ENCODE measurements at regions of chr3 and their contacts with region 1.

Region 1: DNA sequence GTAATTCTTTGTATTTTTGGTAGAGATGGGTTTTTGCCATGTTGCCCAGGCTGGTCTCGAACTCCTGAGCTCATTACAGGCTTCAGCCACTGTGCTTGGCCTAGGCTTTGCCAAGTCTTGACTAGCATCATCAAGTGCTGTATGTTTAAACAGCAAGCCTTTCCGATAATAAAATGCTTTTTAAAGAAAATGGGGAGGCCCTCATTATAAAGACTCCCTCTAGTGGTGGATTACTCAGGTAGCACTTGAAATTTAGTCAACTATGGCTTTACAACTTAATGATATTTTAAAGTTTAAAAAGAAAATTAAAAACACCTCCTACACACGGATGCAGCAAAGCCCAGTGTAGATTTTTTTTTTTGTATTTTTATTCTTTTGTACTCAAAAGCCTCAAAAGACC is 213.6 kb downstream of the GAP43 start:
- DNase-seq: no peak
- ATAC-seq: peak; percentile 52; the same call in 2 of the 3 replicates
- H3K4me3 ChIP-seq: no peak overlapping the region
- H3K27ac ChIP-seq: no peak overlapping the region
- H3K4me1 ChIP-seq: no peaks in the 10 kb centered on the region
- H3K27me3 ChIP-seq: no peaks in the 10 kb centered on the region
- CTCF ChIP-seq: peak; percentile 35 to 61 (median 42)
- EP300 ChIP-seq: no peak
- POLR2A ChIP-seq: no peak
- RAD21 ChIP-seq: no peak

Region 2: GRCh38 chr3:115814778-115815380 is 22.1 kb before region 1 on chr3:
- CTCF ChIA-PET with region 1: interaction called, 11 read pairs
- POLR2A ChIA-PET with region 1: no interaction called
- RAD21 ChIA-PET with region 1: no interaction called
- SMC1A ChIA-PET with region 1: interaction called, 7 read pairs
- in situ Hi-C with region 1: no loop called
- intact Hi-C with region 1: no loop called
- DNase-seq: no peak
- ATAC-seq: peak; percentile 73
- H3K4me3 ChIP-seq: no peak overlapping the region
- H3K27ac ChIP-seq: no peak overlapping the region
- H3K4me1 ChIP-seq: no peaks in the 10 kb centered on the region
- H3K27me3 ChIP-seq: no peaks in the 10 kb centered on the region; a peak in 1 of 4 replicates
- CTCF ChIP-seq: peak; percentile 85
- EP300 ChIP-seq: no peak
- POLR2A ChIP-seq: no peak
- RAD21 ChIP-seq: peak; percentile 68

Region 3: GRCh38 chr3:115819785-115820384 is 17.1 kb before region 1 on chr3:
- CTCF ChIA-PET with region 1: interaction called, 34 read pairs
- POLR2A ChIA-PET with region 1: no interaction called
- RAD21 ChIA-PET with region 1: no interaction called
- SMC1A ChIA-PET with region 1: interaction called, 7 read pairs
- in situ Hi-C with region 1: no loop called
- intact Hi-C with region 1: no loop called
- DNase-seq: peak; percentile 45
- ATAC-seq: peak; percentile 96
- H3K4me3 ChIP-seq: no peak overlapping the region
- H3K27ac ChIP-seq: no peak overlapping the region
- H3K4me1 ChIP-seq: no peaks in the 10 kb centered on the region
- H3K27me3 ChIP-seq: no peaks in the 10 kb centered on the region
- CTCF ChIP-seq: peak; percentile 93 to 100 (median 99)
- EP300 ChIP-seq: no peak
- POLR2A ChIP-seq: no peak
- RAD21 ChIP-seq: peak; percentile 79

Region 4: DNA sequence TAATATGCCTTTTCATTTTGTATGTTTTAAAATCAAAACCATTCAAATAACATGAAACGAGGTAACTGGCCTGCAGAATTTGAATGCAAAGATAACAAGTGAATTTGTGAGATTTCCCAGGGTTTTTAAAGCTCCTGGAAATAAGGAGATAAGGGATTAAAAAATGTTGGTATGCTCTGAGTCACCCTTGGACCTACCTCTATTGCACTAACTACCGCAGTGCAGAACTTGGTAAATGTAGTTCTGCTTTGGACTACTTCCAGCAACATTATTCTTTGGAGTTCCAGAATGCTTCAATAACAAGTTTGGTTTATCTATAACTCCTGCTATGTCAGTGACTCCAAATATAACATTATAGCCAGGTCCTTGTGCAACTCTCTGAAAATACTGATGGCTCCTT is 11.9 kb before region 1 on chr3:
- CTCF ChIA-PET with region 1: interaction called, 34 read pairs
- POLR2A ChIA-PET with region 1: no interaction called
- RAD21 ChIA-PET with region 1: no interaction called
- SMC1A ChIA-PET with region 1: interaction called, 7 read pairs
- in situ Hi-C with region 1: no loop called
- intact Hi-C with region 1: no loop called
- DNase-seq: no peak
- ATAC-seq: no peak
- H3K4me3 ChIP-seq: no peak overlapping the region
- H3K27ac ChIP-seq: no peak overlapping the region
- H3K4me1 ChIP-seq: no peaks in the 10 kb centered on the region
- H3K27me3 ChIP-seq: no peaks in the 10 kb centered on the region
- CTCF ChIP-seq: no peak
- EP300 ChIP-seq: no peak
- POLR2A ChIP-seq: no peak
- RAD21 ChIP-seq: no peak

Region 5: DNA sequence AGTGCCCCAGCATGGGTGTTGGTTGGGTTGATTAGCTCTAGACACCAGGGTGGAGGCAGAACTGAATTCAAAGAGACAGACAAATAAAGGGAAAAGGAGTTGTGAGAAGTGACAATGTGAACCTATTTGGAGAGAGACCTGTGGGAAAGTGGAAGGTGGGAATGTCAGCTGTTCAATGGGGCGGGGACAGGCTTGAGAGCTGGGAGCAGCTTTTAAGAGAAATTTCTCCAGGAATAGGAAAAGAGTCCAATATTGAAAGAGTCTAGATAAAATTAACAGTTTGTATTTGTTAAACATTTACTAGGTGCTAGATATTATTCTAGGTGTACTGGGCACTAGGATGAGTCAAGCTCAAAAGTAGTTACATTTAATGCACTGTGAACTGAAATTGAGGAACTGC is 11.7 kb after region 1 on chr3:
- CTCF ChIA-PET with region 1: interaction called, 20 read pairs
- POLR2A ChIA-PET with region 1: no interaction called
- RAD21 ChIA-PET with region 1: no interaction called
- SMC1A ChIA-PET with region 1: interaction called, 4 read pairs
- in situ Hi-C with region 1: no loop called
- intact Hi-C with region 1: no loop called
- DNase-seq: no peak
- ATAC-seq: no peak
- H3K4me3 ChIP-seq: no peak overlapping the region
- H3K27ac ChIP-seq: no peak overlapping the region
- H3K4me1 ChIP-seq: no peaks in the 10 kb centered on the region
- H3K27me3 ChIP-seq: no peaks in the 10 kb centered on the region
- CTCF ChIP-seq: no peak
- EP300 ChIP-seq: no peak
- POLR2A ChIP-seq: no peak
- RAD21 ChIP-seq: no peak